ENCODE measurements at regions of chr17 and their contacts with region 1.

Region 1: DNA sequence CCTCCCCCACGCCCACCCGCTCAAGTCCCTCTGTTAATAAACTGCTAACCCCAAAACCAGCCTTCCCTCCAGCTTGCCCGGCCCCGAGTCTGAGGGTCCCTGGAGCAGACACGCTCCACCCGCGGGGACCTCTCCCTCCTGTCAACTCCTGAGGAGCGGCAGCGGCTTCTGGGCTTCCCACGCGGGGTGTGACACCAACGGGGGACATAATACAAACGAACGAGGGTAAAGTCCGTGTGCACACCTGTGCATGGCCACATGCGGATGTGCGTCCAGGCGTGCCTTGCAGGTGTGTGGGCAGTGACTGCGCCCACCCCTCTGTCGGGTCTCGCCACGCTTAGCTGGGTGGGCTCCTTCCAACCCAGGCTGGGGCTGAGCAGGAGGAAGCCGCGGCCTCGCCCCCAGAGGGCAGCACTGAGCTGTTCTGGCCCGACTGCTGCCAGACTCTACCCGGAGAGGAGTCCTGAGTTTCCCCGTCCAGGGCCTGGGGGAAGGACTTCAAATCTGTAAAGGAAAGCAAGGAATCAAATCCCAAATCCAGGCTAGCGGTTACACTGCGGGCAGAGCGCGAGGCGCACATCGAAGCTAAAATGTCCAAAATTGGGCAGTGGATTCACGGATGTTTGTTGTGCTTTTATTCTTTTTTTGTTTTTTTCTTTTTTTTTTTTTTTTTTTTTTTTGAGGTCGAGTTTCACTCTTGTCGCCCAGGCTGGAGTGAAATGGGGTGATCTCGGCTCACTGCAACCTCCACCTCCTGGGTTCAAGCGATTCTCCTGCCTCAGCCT is 24.2 kb upstream of the KRT17 start:
- DNase-seq: peak; percentile 89
- ATAC-seq: peak; percentile 90
- H3K4me3 Mint-ChIP-seq: peak overlapping the region; percentile 55
- H3K27ac Mint-ChIP-seq: peak overlapping the region; percentile 75
- H3K4me1 Mint-ChIP-seq: peaks cover 8% of the 10 kb centered on the region
- H3K27me3 Mint-ChIP-seq: no peaks in the 10 kb centered on the region

Region 2: DNA sequence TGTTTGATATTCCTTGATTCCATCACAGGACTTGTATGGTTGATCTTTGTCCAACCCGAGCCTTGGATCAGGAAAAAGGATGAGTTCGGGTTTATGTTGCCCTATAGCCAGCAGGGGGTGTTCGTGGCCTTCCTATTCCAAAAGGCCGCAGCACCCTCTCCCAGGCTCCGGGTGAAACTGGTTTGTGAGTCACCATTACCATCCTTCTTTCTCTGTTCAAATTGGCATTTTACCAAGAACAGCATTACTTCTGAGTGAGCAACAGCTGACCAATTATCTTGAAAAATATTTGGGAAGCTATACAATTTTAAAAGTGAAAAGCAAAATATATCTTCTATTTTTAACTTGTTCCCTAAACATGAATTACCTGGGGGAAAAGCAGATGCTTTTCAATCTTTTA is 739.3 kb before region 1 on chr17:
- CTCF ChIA-PET with region 1: interaction called, 11 read pairs
- DNase-seq: peak; percentile 70
- ATAC-seq: peak; percentile 83
- H3K4me3 Mint-ChIP-seq: no peak overlapping the region
- H3K27ac Mint-ChIP-seq: no peak overlapping the region
- H3K4me1 Mint-ChIP-seq: no peaks in the 10 kb centered on the region
- H3K27me3 Mint-ChIP-seq: peaks cover 49% of the 10 kb centered on the region

Region 3: DNA sequence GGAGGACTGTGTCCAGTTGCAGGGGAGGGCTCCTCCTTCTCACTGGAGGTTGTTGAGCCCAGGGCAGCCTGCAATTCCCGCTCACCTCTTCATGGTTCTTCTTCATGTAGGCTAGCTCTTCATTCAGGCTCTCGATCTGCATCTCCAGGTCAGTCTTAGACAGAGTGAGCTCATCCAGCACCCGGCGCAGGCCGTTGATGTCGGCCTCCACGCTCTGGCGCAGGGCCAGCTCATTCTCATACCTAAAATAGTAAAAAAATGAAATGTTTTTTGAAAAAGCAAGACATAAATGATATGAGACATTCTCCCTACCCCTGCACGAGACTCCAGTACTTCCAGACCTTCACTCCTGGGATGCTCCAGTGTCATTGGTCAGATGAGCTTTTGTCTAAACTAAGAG is 145.4 kb before region 1 on chr17:
- CTCF ChIA-PET with region 1: interaction called, 10 read pairs
- DNase-seq: no peak
- ATAC-seq: no peak
- H3K4me3 Mint-ChIP-seq: no peak overlapping the region
- H3K27ac Mint-ChIP-seq: no peak overlapping the region
- H3K4me1 Mint-ChIP-seq: peaks cover 4% of the 10 kb centered on the region
- H3K27me3 Mint-ChIP-seq: peaks cover 2% of the 10 kb centered on the region

Region 4: DNA sequence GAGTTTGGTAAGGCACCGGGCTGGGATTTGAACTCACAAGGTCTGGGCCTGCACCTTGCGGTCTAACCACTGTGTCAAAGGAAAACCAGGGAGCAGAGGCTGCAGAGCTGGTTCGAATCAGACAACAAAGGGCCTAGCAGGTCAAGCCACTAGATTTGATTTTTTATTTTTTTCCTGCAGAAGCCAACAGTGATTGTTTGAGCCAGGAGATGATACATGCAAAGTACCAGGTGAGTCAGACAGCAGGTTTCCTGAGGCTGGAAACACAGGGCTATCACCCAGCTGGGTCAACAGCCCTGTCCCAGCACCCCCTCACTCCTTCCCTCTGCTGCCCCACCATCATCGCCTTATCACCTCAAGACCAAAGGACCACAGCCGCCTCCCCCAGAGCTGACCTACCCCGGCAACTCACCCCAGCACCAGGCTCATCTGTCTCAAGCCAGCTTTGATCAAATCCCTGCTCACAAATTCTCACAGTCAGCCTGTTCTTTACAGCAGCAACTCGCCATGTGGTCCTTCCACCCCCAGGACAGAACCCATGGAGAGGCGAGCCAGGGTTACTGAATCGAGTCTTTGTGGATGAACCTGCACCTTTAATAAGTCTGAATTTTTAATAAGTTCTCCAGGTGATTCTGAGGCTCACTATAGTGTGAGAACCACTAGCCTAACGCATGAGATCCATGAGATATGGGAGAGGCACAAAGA is 107.5 kb before region 1 on chr17:
- CTCF ChIA-PET with region 1: interaction called, 13 read pairs
- DNase-seq: no peak
- ATAC-seq: no peak
- H3K4me3 Mint-ChIP-seq: no peak overlapping the region
- H3K27ac Mint-ChIP-seq: no peak overlapping the region
- H3K4me1 Mint-ChIP-seq: no peaks in the 10 kb centered on the region
- H3K27me3 Mint-ChIP-seq: peaks cover 14% of the 10 kb centered on the region

Region 5: GRCh38 chr17:41579484-41580243 is 68.9 kb before region 1 on chr17:
- CTCF ChIA-PET with region 1: interaction called, 28 read pairs
- DNase-seq: peak; percentile 85
- ATAC-seq: peak; percentile 95
- H3K4me3 Mint-ChIP-seq: no peak overlapping the region
- H3K27ac Mint-ChIP-seq: no peak overlapping the region
- H3K4me1 Mint-ChIP-seq: no peaks in the 10 kb centered on the region
- H3K27me3 Mint-ChIP-seq: peaks cover 41% of the 10 kb centered on the region

Region 6: DNA sequence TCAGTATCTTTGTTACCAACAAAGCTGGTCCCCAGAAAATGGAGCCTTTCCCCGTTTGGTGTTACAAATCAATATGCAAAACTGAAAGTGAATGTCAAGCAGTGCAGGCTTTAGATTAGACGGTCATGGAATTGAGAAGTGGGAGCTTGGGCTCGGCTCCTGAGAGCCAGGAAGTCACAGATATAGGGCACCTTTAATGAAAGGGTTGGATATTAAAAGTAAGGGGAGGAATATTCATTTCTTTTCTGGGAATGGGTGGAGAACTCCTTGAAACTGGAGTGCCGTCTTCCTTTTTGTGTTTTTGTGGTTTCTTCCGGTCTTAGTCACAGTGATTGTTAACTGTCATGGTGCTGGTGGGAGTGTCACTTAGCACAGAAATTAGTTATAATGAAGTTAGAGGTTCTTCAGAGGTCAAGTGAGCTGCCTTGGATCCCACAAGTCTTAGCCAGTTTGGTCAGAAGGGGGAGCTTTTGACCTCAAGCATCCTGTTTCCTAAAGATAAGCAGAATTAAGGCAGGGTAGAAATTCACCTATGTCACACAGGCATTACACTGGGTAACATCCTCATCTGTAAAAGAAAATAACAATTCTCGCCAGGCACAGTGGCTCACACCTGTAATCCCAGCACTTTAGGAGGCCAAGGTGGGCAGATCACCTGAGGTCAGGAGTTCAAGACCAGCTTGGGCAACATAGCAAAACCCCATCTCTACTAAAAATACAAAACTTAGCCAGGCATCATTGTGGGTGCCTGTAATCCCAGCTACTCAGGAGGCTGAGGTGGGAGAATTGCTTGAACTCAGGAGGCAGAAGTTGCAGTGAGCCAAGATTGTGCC is 30.5 kb after region 1 on chr17:
- CTCF ChIA-PET with region 1: interaction called, 30 read pairs
- DNase-seq: peak; percentile 93
- ATAC-seq: peak; percentile 89
- H3K4me3 Mint-ChIP-seq: peak overlapping the region; percentile 88
- H3K27ac Mint-ChIP-seq: peak overlapping the region; percentile 94
- H3K4me1 Mint-ChIP-seq: peaks cover 65% of the 10 kb centered on the region
- H3K27me3 Mint-ChIP-seq: no peaks in the 10 kb centered on the region

Region 7: GRCh38 chr17:41710468-41711090 is 62.0 kb after region 1 on chr17:
- CTCF ChIA-PET with region 1: interaction called, 12 read pairs
- DNase-seq: no peak
- ATAC-seq: no peak
- H3K4me3 Mint-ChIP-seq: no peak overlapping the region
- H3K27ac Mint-ChIP-seq: no peak overlapping the region
- H3K4me1 Mint-ChIP-seq: peaks cover 4% of the 10 kb centered on the region
- H3K27me3 Mint-ChIP-seq: peaks cover 17% of the 10 kb centered on the region